ENCODE measurements at regions of chr2 and their contacts with region 1.

Region 1: DNA sequence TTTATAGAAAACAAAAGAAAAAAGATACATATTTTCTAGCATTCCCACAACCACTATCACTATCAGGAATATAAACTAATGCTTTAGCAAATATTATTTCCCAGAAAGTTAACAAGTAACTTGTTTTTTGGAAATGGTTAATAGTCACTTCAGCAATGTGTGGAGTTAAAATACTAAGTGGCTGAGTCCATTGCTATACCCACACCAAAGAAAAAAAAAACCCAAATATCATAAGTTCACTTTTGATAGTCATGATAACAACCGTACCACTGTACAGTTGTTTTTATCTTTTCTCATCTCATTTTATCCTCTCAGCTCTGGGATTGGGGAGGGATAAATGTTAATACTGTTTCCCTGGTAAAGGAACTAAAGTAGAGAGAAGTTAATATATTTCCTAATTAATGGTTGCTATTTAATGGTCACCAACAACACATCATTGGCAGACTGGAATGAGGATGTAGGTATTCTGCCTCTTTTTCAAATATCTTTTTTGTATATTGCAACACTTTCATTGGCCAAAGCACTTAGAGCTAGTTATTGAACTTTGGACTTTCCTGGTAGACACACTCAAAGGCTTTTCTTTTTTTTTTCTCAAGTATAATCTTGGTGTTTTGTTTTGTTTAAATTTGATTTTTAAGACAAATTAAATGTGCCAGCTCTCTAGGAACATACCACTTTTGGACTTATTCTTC is 18.4 kb upstream of the KANSL1L start:
- DNase-seq: no peak
- H3K4me3 Mint-ChIP-seq: peak overlapping the region; percentile 41
- H3K27ac Mint-ChIP-seq: peak overlapping the region; percentile 92
- H3K4me1 Mint-ChIP-seq: peaks cover 16% of the 10 kb centered on the region
- H3K27me3 Mint-ChIP-seq: no peaks in the 10 kb centered on the region
- CTCF ChIP-seq: no peak

Region 2: GRCh38 chr2:210158236-210158635 is 31.4 kb before region 1 on chr2:
- CTCF ChIA-PET with region 1: interaction called, 7 read pairs
- intact Hi-C with region 1: loop called (anchors 5 kb)
- DNase-seq: no peak
- H3K4me3 Mint-ChIP-seq: no peak overlapping the region
- H3K27ac Mint-ChIP-seq: no peak overlapping the region
- H3K4me1 Mint-ChIP-seq: peaks cover 14% of the 10 kb centered on the region
- H3K27me3 Mint-ChIP-seq: no peaks in the 10 kb centered on the region
- CTCF ChIP-seq: no peak